ENCODE measurements at regions of chr11 and their contacts with region 1.

Region 1: GRCh38 chr11:102733232-102733875 is 8.6 kb upstream of the MMP8 start:
- DNase-seq: peak; percentile 43
- ATAC-seq: no peak

Region 2: GRCh38 chr11:102933627-102934026 is 200.3 kb after region 1 on chr11:
- intact Hi-C with region 1: loop called (anchors 10 kb)
- DNase-seq: no peak
- ATAC-seq: no peak

Measured in left ventricle myocardium superior (tissue), 1 donor.